Activated CD4-positive, alpha-beta T cell treated with anti-CD3 and anti-CD28 coated beads, Interleukin-2, amount 10 ng/mL, durations not matched to agents 24 days and 14 days (primary cell): ENCODE measurements at regions of chr5 and their contacts with region 1.

Region 1: DNA sequence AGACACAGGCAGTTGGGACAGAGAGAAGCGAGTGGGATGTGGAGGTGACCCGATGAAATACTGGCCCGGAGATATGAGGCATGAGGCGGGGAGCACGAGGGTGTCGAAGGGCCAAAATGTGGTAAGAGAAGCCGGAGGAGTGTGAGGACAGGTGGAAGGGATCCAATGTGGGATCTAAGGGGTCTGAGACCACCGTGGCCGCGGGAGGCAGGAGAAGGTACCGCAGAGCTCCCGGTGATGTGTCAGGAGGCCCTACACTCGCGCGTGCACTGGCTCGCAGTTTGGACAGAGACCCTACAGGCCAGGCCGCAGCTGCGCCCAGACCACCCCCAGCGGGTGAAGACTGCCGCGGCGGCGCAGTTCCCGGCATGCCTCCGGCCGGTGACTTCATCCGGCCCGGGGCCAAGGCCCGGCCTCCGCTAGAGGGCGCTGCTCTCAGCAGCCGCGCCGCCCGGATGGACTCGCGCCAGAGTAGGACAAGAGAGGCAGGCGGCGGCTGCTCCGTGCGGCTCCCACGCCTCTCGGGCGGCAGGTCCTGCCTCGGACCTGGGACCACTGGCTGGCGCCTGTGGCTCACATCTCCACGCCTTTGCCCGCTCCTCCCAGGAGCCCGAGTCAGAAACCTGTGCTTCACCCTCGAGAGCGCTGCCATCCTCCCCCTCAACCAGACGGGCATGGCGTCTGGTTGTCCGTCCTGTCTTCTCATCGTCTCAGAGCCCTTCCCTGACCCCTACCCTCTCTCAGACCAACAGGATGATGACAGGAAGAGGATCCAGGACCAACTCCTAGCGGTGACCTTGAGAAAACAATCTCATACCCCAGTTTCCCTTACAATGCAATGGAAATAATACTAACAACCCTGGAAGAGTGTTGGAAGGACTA is 35.4 kb upstream of the STING1 start:
- DNase-seq: peak; percentile 98
- H3K4me3 Mint-ChIP-seq: peak overlapping the region; percentile 83
- H3K27ac Mint-ChIP-seq: peak overlapping the region; percentile 93
- H3K4me1 Mint-ChIP-seq: peaks cover 28% of the 10 kb centered on the region
- H3K27me3 Mint-ChIP-seq: no peaks in the 10 kb centered on the region

Region 2: GRCh38 chr5:139341650-139342422 is 176.1 kb before region 1 on chr5 and contains the start of gene PAIP2:
- intact Hi-C with region 1: loop called (anchors 5 kb)
- DNase-seq: peak; percentile 99
- H3K4me3 Mint-ChIP-seq: peak within 1 kb of the TSS; percentile 97
- H3K27ac Mint-ChIP-seq: peak within 1 kb of the TSS; percentile 100
- H3K4me1 Mint-ChIP-seq: peaks cover 39% of the 10 kb centered on the region
- H3K27me3 Mint-ChIP-seq: no peaks in the 10 kb centered on the region
- total RNA-seq, gene PAIP2: 83.3 and 93.8 TPM in 2 replicates

Region 3: GRCh38 chr5:139422307-139422893 is 95.5 kb before region 1 on chr5:
- intact Hi-C with region 1: loop called (anchors 1 kb)
- DNase-seq: peak; percentile 91
- H3K4me3 Mint-ChIP-seq: no peak overlapping the region
- H3K27ac Mint-ChIP-seq: peak overlapping the region; percentile 62
- H3K4me1 Mint-ChIP-seq: peaks cover 32% of the 10 kb centered on the region
- H3K27me3 Mint-ChIP-seq: no peaks in the 10 kb centered on the region

Region 4: GRCh38 chr5:139446956-139447779 is 70.8 kb before region 1 on chr5:
- intact Hi-C with region 1: loop called (anchors 2 kb)
- DNase-seq: peak; percentile 78
- H3K4me3 Mint-ChIP-seq: peak overlapping the region; percentile 54
- H3K27ac Mint-ChIP-seq: peak overlapping the region; percentile 96
- H3K4me1 Mint-ChIP-seq: peaks cover 61% of the 10 kb centered on the region
- H3K27me3 Mint-ChIP-seq: no peaks in the 10 kb centered on the region

Region 5: DNA sequence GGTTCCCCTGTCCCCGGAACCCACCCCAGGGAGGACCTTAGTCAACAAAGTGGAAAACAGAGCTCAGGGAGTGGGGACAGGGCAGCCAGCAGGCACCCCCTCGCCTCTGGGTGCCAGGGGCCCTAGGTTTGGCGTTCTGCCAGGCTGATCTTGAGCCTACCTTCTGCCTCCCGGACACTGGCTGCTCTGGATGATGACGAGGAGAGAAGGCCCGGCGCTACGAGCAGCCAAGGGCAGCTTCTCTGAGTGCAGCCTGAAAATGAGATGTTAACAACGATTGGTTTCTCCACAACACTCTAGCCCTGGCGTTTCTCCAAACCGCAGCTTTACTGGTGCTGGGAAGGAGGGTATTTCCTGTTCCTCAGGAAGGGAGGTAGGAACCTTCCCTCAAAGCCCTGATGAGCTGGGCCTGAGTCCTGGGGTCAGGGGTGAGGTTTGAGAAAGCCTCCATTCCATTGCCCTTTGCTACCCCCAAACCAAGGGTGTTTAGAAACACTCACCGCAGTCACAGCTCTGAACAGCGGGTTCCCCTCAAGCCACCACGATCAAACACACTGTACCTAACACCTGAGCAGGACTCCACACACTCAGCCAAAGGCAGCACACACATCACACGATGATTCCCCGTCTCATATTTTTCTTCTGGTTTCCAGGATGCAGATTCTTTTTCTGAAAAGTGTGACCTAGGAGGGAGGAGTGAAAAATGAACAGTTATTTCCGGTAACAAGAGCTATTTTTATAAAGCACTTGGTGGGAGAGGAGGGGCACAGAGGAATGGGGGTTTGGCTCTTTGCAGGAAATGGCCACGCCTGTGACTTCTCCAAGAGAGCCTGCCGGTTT is 35.7 kb before region 1 on chr5 and contains the start of gene STING1:
- intact Hi-C with region 1: loop called (anchors 5 kb)
- DNase-seq: peak; percentile 89
- H3K4me3 Mint-ChIP-seq: peak within 1 kb of the TSS; percentile 89
- H3K27ac Mint-ChIP-seq: peak within 1 kb of the TSS; percentile 96
- H3K4me1 Mint-ChIP-seq: peaks cover 38% of the 10 kb centered on the region
- H3K27me3 Mint-ChIP-seq: no peaks in the 10 kb centered on the region
- total RNA-seq, gene STING1: 198 and 201 TPM in 2 replicates

Region 6: GRCh38 chr5:139765409-139766217 is 247.7 kb after region 1 on chr5:
- intact Hi-C with region 1: loop called (anchors 1 kb)
- DNase-seq: peak; percentile 92
- H3K4me3 Mint-ChIP-seq: peak overlapping the region; percentile 79
- H3K27ac Mint-ChIP-seq: peak overlapping the region; percentile 39
- H3K4me1 Mint-ChIP-seq: peaks cover 10% of the 10 kb centered on the region
- H3K27me3 Mint-ChIP-seq: peaks cover 38% of the 10 kb centered on the region